CD4-positive, alpha-beta memory T cell (primary cell): ENCODE measurements at regions of chr10 and their contacts with region 1.

Region 1: DNA sequence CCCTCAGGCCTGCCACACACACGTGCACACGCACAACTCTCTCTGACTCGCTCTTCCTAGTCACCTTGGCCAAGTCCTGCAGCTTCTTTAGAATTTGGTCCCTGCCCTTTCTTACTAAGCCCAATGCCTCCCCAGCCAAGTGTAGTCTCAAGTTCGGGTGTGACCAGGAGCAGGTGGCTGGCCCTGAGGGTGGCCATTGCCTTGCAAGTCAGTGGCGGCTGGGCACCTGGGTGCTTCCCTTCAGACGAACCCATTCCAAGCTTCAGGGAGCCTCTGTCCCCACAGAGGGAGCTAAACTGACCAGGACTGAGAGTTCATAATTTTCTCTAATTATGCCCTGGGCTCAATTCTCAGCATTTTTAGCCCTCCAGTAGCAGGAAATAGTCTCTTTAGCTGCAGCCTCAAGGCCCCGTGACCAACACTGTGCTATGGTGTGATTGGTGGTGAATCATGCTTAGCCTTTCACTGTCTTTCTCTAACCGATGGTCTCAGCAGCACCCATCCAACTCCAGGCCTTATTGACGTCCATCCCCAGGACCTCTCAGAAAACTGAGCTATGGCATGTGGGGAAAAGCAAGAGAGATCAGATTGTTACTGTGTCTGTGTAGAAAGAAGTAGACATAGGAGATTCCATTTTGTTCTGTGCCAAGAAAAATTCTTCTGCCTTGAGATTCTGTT is 34.7 kb upstream of the FXYD4 start:
- DNase-seq: no peak
- H3K4me3 ChIP-seq: no peak overlapping the region
- H3K4me3 Mint-ChIP-seq: no peak overlapping the region
- H3K27ac ChIP-seq: no peak overlapping the region
- H3K27ac Mint-ChIP-seq: peak overlapping the region in 2 of 7 donors; percentile 17 to 72
- H3K4me1 ChIP-seq: peaks cover 25% of the 10 kb centered on the region
- H3K4me1 Mint-ChIP-seq: peaks cover 26 to 56% (median 30%) of the 10 kb centered on the region in 4 donors
- H3K27me3 ChIP-seq: no peaks in the 10 kb centered on the region
- H3K27me3 Mint-ChIP-seq: peaks cover 3% of the 10 kb centered on the region in 2 donors

Region 2: DNA sequence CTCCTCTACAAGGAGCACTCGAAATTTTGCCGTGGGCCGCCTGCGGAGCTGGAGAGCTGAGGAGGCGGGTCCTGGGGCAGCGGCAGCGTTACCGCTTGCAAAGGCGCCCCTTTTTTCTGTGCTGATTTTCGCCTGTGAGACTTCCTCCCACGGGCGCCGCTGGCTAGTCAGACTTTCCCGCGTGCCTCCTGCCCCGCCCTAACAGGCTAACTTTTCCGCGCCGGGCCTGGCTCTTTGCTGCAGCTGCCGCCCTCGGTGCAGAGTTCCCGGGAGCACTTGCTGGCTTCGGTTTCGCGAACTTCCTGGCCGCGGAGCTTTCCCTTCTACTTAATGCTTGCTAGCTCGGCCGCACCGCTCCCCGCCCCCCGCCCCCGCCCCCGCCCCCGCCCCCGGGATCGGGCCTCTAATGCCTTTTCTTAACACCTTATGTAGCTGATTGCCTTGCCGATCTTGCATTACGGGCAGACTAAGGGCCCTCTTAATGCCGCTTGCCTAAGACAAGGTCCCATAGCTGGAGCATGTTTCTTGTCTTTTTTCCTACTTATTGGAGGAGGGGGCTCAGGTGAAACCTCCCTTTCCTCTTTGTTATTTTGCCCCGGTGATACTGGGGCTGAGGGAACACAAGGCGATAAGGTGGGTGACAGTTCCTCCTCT is 32.0 kb before region 1 on chr10:
- CTCF ChIA-PET with region 1: interaction called, 3 read pairs
- POLR2A ChIA-PET with region 1: interaction called, 9 read pairs
- intact Hi-C with region 1: loop called (anchors 2 kb)
- DNase-seq: peak in 4 of 5 donors; percentile 41 to 68 (median 44)
- H3K4me3 ChIP-seq: peak overlapping the region in 1 of 2 donors; percentile 44
- H3K4me3 Mint-ChIP-seq: peak overlapping the region; percentile 74 to 87 (median 84)
- H3K27ac ChIP-seq: peak overlapping the region; percentile 8
- H3K27ac Mint-ChIP-seq: peak overlapping the region; percentile 55 to 91 (median 88)
- H3K4me1 ChIP-seq: peaks cover 47% of the 10 kb centered on the region
- H3K4me1 Mint-ChIP-seq: peaks cover 48 to 73% (median 60%) of the 10 kb centered on the region in 4 donors
- H3K27me3 ChIP-seq: no peaks in the 10 kb centered on the region
- H3K27me3 Mint-ChIP-seq: no peaks in the 10 kb centered on the region

Region 3: GRCh38 chr10:43322769-43323168 is 14.0 kb before region 1 on chr10:
- CTCF ChIA-PET with region 1: interaction called, 3 read pairs
- POLR2A ChIA-PET with region 1: interaction called, 15 read pairs
- intact Hi-C with region 1: no loop called
- DNase-seq: peak; percentile 78 to 90 (median 87)
- H3K4me3 ChIP-seq: peak overlapping the region in 1 of 2 donors; percentile 13
- H3K4me3 Mint-ChIP-seq: peak overlapping the region in 7 of 8 donors; percentile 35 to 71 (median 60)
- H3K27ac ChIP-seq: no peak overlapping the region
- H3K27ac Mint-ChIP-seq: peak overlapping the region; percentile 68 to 94 (median 88)
- H3K4me1 ChIP-seq: peaks cover 16% of the 10 kb centered on the region
- H3K4me1 Mint-ChIP-seq: peaks cover 10 to 46% (median 19%) of the 10 kb centered on the region in 4 donors
- H3K27me3 ChIP-seq: no peaks in the 10 kb centered on the region
- H3K27me3 Mint-ChIP-seq: no peaks in the 10 kb centered on the region